WTC11 (cell line): ENCODE measurements at regions of chr4 and their contacts with region 1.

Region 1: GRCh38 chr4:53929955-53930798 is 134.2 kb downstream of the CHIC2 start:
- DNase-seq: peak; percentile 69
- ATAC-seq: peak; percentile 97
- H3K4me3 Mint-ChIP-seq: no peak overlapping the region
- H3K27ac Mint-ChIP-seq: no peak overlapping the region
- H3K4me1 Mint-ChIP-seq: no peaks in the 10 kb centered on the region
- H3K27me3 Mint-ChIP-seq: no peaks in the 10 kb centered on the region
- CTCF ChIP-seq: peak; percentile 53

Region 2: GRCh38 chr4:53830511-53830910 is 99.7 kb before region 1 on chr4:
- CTCF ChIA-PET with region 1: no interaction called
- POLR2A ChIA-PET with region 1: no interaction called
- DNase-seq: no peak
- ATAC-seq: no peak
- H3K4me3 Mint-ChIP-seq: no peak overlapping the region
- H3K27ac Mint-ChIP-seq: no peak overlapping the region
- H3K4me1 Mint-ChIP-seq: no peaks in the 10 kb centered on the region
- H3K27me3 Mint-ChIP-seq: peaks cover 22% of the 10 kb centered on the region
- CTCF ChIP-seq: no peak

Region 3: GRCh38 chr4:53840643-53841042 is 89.5 kb before region 1 on chr4:
- CTCF ChIA-PET with region 1: no interaction called
- POLR2A ChIA-PET with region 1: no interaction called
- DNase-seq: no peak
- ATAC-seq: no peak
- H3K4me3 Mint-ChIP-seq: no peak overlapping the region
- H3K27ac Mint-ChIP-seq: no peak overlapping the region
- H3K4me1 Mint-ChIP-seq: no peaks in the 10 kb centered on the region
- H3K27me3 Mint-ChIP-seq: peaks cover 4% of the 10 kb centered on the region; the same call in 1 of the 2 replicates
- CTCF ChIP-seq: no peak

Region 4: GRCh38 chr4:53908661-53909078 is 21.5 kb before region 1 on chr4:
- CTCF ChIA-PET with region 1: interaction called, 15 read pairs
- POLR2A ChIA-PET with region 1: no interaction called
- DNase-seq: no peak
- ATAC-seq: peak; percentile 74
- H3K4me3 Mint-ChIP-seq: no peak overlapping the region
- H3K27ac Mint-ChIP-seq: no peak overlapping the region
- H3K4me1 Mint-ChIP-seq: peaks cover 20% of the 10 kb centered on the region
- H3K27me3 Mint-ChIP-seq: peaks cover 27% of the 10 kb centered on the region
- CTCF ChIP-seq: peak; percentile 47; the same call in 1 of the 2 replicates

Region 5: GRCh38 chr4:53914313-53915016 is 15.7 kb before region 1 on chr4:
- CTCF ChIA-PET with region 1: interaction called, 15 read pairs
- POLR2A ChIA-PET with region 1: no interaction called
- DNase-seq: no peak
- ATAC-seq: no peak
- H3K4me3 Mint-ChIP-seq: no peak overlapping the region
- H3K27ac Mint-ChIP-seq: no peak overlapping the region
- H3K4me1 Mint-ChIP-seq: peaks cover 7% of the 10 kb centered on the region
- H3K27me3 Mint-ChIP-seq: peaks cover 7% of the 10 kb centered on the region
- CTCF ChIP-seq: no peak

Region 6: GRCh38 chr4:53959373-53960120 is 29.4 kb after region 1 on chr4:
- CTCF ChIA-PET with region 1: interaction called, 13 read pairs
- POLR2A ChIA-PET with region 1: no interaction called
- DNase-seq: no peak
- ATAC-seq: no peak
- H3K4me3 Mint-ChIP-seq: no peak overlapping the region
- H3K27ac Mint-ChIP-seq: no peak overlapping the region
- H3K4me1 Mint-ChIP-seq: peaks cover 38% of the 10 kb centered on the region
- H3K27me3 Mint-ChIP-seq: no peaks in the 10 kb centered on the region
- CTCF ChIP-seq: no peak

Region 7: GRCh38 chr4:54107951-54108873 is 178.0 kb after region 1 on chr4:
- CTCF ChIA-PET with region 1: interaction called, 12 read pairs
- POLR2A ChIA-PET with region 1: interaction called, 10 read pairs
- DNase-seq: no peak
- ATAC-seq: no peak
- H3K4me3 Mint-ChIP-seq: peak overlapping the region; percentile 71
- H3K27ac Mint-ChIP-seq: no peak overlapping the region; the same call in 1 of the 2 replicates
- H3K4me1 Mint-ChIP-seq: peaks cover 63% of the 10 kb centered on the region
- H3K27me3 Mint-ChIP-seq: peaks cover 93% of the 10 kb centered on the region
- CTCF ChIP-seq: no peak

Region 8: DNA sequence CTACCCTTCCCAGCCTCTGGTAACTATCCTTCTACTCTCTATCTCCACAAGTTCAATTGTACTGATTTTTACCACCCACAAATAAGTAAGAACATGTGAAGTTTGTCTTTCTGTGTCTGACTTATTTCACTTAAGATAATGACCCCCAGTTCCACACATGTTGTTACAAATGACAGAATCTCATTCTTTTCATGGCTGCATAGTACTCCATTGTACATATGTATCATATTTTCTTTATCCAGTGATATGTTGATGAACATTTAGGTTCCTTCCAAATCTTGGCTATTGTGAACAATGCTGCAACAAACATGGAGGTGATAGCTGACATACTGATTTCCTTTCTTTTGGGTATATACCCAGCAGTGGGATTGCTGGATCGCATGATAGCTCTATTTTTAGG is 197.5 kb after region 1 on chr4:
- CTCF ChIA-PET with region 1: no interaction called
- POLR2A ChIA-PET with region 1: no interaction called
- DNase-seq: no peak
- ATAC-seq: no peak
- H3K4me3 Mint-ChIP-seq: no peak overlapping the region
- H3K27ac Mint-ChIP-seq: no peak overlapping the region
- H3K4me1 Mint-ChIP-seq: peaks cover 7% of the 10 kb centered on the region
- H3K27me3 Mint-ChIP-seq: no peaks in the 10 kb centered on the region
- CTCF ChIP-seq: no peak

Region 9: DNA sequence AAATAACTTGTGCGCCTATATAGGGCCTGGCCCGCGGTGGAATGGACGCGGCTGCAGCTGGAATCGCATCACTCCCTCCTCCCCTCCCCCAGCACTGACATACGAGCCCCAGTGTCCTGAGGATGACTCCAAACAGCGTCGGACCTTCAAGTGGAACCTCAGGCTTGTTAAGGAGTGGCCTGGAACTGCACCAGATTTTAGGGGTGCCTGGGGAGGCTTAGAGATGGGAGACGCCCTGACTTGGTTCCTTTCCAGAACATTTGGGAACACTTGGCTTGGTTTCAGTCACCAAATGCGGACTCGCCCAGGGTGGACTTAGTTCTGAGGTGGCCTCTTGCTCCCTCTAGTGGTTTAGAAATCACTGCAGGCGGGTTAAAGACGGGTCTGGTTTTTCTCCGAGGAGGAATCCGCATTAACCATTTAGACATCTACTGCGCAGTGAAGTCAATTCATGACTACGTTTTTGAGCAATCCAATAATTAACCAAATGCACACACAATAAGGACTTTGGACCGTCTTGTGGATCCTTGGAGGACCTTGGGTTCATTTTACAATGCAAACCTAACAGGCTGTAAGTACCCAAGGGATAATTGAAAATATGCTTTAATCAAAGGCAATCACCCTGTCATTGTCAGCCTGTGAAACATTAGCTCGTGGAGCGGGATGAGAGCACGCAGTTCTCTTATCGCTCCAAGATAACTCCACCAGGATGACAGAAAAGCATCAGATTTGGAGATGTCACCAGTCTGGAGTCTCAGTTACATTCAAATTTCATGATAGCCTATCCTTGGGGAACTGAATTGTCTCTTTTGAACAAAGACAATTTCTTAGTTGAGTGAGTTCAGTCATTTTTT is 287.7 kb after region 1 on chr4:
- CTCF ChIA-PET with region 1: interaction called, 44 read pairs
- POLR2A ChIA-PET with region 1: no interaction called
- DNase-seq: peak; percentile 69
- ATAC-seq: peak; percentile 92
- H3K4me3 Mint-ChIP-seq: peak overlapping the region; percentile 68
- H3K27ac Mint-ChIP-seq: no peak overlapping the region
- H3K4me1 Mint-ChIP-seq: peaks cover 11% of the 10 kb centered on the region
- H3K27me3 Mint-ChIP-seq: peaks cover 62% of the 10 kb centered on the region
- CTCF ChIP-seq: peak; percentile 84